Esophagus muscularis mucosa (tissue), 4 donors: ENCODE measurements at regions of chr5 and their contacts with region 1.

Region 1: DNA sequence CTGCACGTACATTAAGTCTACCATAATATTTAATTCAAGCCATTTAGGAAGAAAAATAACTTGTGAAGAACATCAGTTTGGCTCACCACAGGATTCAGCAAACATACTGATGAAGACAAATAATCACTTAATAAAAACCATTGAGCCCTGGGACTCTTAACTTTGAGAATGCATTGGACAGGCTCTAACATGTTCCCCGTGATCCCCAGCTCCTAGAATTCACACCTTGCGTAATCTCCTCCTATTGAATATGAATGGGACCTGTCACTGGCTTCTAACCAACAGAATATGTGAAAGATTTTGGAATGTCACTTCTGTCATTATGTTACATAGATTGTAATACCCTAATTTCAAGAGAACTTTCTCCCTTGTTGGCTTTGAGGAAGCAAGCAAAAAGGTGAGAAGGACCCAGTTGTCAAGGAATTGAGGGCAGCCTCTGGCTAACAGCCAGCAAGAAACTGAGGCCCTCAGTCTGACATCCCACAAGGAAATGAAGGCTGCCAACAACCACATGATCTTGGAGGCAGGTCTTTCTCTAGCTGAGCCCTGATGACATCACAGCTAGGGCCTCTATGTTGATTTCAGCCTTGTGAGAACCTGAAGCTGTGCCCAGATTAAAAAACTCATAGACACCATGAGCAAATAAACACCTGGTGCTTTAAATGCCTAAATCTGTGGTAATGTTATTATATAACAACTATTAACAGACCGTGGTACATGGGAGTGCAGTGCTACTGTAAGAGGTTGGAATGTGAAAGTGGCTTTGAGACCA is 433.2 kb downstream of the SEMA5A start:
- DNase-seq: no peak
- H3K4me3 ChIP-seq: no peak overlapping the region
- H3K27ac ChIP-seq: no peak overlapping the region
- H3K4me1 ChIP-seq: no peaks in the 10 kb centered on the region
- H3K27me3 ChIP-seq: no peaks in the 10 kb centered on the region
- CTCF ChIP-seq: no peak
- EP300 ChIP-seq: no peak
- POLR2A ChIP-seq: no peak

Region 2: DNA sequence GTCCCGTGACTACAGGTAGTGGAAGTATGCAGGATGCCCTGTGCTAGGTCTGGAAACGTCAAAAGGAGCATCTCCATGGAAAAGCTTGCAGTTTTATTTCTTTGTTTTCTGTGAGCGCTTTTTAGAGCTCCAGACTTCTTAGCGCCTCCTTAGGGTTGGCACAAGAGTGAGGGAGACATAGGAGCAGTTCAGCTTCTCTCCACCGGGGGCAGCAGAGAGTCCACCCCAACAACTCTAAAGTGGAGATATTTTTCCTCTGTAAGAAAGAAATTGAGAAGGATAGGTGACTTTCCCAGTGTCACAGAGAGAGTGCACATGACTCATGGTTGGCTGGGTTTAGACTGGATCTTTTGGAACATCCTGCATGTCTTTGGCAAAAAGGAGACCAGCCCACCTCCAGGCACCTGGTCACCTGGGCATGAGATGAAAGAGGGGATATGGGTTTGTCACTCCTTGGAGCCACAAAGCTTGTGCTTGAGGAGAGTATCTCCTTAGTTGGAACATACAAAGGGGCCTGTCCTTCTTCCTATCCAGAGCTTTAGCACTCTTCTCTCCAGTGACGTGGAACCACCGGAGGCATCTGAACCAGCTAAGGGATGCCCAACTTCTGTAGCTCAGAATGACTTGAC is 204.5 kb before region 1 on chr5:
- intact Hi-C with region 1: no loop called
- DNase-seq: no peak
- H3K4me3 ChIP-seq: no peak overlapping the region
- H3K27ac ChIP-seq: no peak overlapping the region
- H3K4me1 ChIP-seq: no peaks in the 10 kb centered on the region
- H3K27me3 ChIP-seq: no peaks in the 10 kb centered on the region
- CTCF ChIP-seq: peak in 2 of 3 experiments; percentile 27 to 50
- EP300 ChIP-seq: no peak
- POLR2A ChIP-seq: no peak

Region 3: DNA sequence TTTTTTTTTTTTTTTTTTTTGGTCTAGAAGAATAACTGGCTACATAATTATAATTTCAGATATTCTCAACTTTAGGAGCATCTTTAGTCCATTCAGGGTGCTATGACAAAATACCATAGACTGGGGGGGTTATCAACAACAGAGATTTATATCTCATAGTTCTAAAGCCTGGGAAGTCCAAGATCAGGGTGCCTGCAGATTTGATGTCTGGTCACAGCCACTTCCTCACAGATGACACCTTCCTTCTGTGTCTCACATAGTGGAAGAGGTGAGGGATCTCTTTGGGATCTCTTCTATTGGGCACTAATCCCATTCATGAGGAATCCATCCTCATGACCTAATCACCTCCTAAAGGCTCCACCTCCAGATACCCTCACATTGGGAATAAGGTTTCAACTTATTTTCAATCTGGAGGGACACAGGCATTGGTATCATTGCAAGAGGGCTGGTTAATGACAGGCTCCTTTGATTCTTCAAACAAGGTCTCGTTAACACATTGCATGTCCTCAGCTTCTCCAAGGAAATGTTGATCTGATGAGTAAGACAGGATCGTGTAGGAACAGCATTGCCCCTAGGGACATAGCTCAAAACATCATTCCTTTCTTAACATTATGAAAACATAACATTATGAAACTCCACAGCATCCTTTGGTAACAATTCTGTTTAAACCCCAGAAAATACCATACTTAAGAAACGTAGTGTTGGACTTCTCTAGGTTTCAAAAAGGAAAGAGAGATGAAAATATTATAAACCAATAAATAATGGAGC is 60.8 kb after region 1 on chr5:
- intact Hi-C with region 1: loop called (anchors 2 kb)
- DNase-seq: peak; percentile 50
- H3K4me3 ChIP-seq: no peak overlapping the region
- H3K27ac ChIP-seq: no peak overlapping the region
- H3K4me1 ChIP-seq: no peaks in the 10 kb centered on the region
- H3K27me3 ChIP-seq: no peaks in the 10 kb centered on the region
- CTCF ChIP-seq: no peak
- EP300 ChIP-seq: no peak
- POLR2A ChIP-seq: no peak